Colonic mucosa (tissue), 4 donors: ENCODE measurements at regions of chr5 and their contacts with region 1.

Region 1: GRCh38 chr5:321230-321725 is at the start of gene AHRR:
- DNase-seq: peak; percentile 66
- H3K4me3 ChIP-seq: peak within 1 kb of the TSS; percentile 44
- H3K27ac ChIP-seq: no peak within 1 kb of the TSS
- H3K4me1 ChIP-seq: peaks cover 7% of the 10 kb centered on the region
- H3K27me3 ChIP-seq: peaks cover 38% of the 10 kb centered on the region
- CTCF ChIP-seq: peak; percentile 21
- total RNA-seq, gene AHRR: 1.9 to 2.1 TPM

Region 2: DNA sequence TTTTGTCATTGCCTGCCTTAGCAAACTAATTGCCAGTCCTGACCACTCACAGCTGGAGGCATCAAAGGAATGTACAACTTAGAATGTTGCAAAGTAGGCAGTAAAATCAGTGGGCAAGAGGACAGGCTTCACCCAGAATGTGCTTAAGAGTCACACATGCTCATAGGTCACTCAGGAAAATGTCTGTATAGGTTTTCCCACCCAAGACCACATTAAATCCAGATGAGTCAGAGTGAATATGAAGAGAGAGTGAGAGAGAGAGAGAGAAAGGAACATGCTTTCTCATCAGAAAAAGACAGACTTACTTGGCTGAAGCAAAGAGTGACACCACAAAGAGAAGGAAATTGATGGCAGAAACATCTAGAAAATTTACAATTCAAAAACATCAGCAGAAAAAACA is 191.5 kb before region 1 on chr5:
- intact Hi-C with region 1: no loop called
- DNase-seq: no peak
- H3K4me3 ChIP-seq: no peak overlapping the region
- H3K27ac ChIP-seq: no peak overlapping the region
- H3K4me1 ChIP-seq: no peaks in the 10 kb centered on the region
- H3K27me3 ChIP-seq: no peaks in the 10 kb centered on the region
- CTCF ChIP-seq: no peak

Region 3: GRCh38 chr5:424301-425110 is 103.2 kb after region 1 on chr5:
- intact Hi-C with region 1: loop called (anchors 5 kb)
- DNase-seq: no peak
- H3K4me3 ChIP-seq: no peak overlapping the region
- H3K27ac ChIP-seq: no peak overlapping the region
- H3K4me1 ChIP-seq: no peaks in the 10 kb centered on the region
- H3K27me3 ChIP-seq: no peaks in the 10 kb centered on the region
- CTCF ChIP-seq: no peak